ENCODE measurements at regions of chr12 and their contacts with region 1.

Region 1: GRCh38 chr12:15899282-15899870 is 11.8 kb upstream of the DERA start:
- DNase-seq: peak in 1 of 2 experiments; percentile 35
- ATAC-seq: peak in 1 of 2 experiments; percentile 67; a peak in 4 of 6 replicates
- H3K4me3 ChIP-seq: no peak overlapping the region
- H3K27ac ChIP-seq: no peak overlapping the region
- H3K4me1 ChIP-seq: no peaks in the 10 kb centered on the region
- CTCF ChIP-seq: peak; percentile 84
- EP300 ChIP-seq: no peak
- POLR2A ChIP-seq: no peak
- RAD21 ChIP-seq: peak; percentile 57 to 64

Region 2: GRCh38 chr12:15842108-15842507 is 57.3 kb before region 1 on chr12:
- CTCF ChIA-PET with region 1: no interaction called
- POLR2A ChIA-PET with region 1: no interaction called
- DNase-seq: peak in 1 of 2 experiments; percentile 19
- ATAC-seq: no peak
- H3K4me3 ChIP-seq: no peak overlapping the region
- H3K27ac ChIP-seq: no peak overlapping the region
- H3K4me1 ChIP-seq: peaks cover 9% of the 10 kb centered on the region; the same call in 2 of the 3 replicates
- CTCF ChIP-seq: no peak
- EP300 ChIP-seq: no peak
- POLR2A ChIP-seq: no peak
- RAD21 ChIP-seq: no peak

Region 3: GRCh38 chr12:15886372-15887042 is 12.9 kb before region 1 on chr12:
- CTCF ChIA-PET with region 1: interaction called, 10 read pairs
- POLR2A ChIA-PET with region 1: interaction called, 4 read pairs
- DNase-seq: peak in 1 of 2 experiments; percentile 28
- ATAC-seq: no peak
- H3K4me3 ChIP-seq: no peak overlapping the region
- H3K27ac ChIP-seq: no peak overlapping the region
- H3K4me1 ChIP-seq: peaks cover 37% of the 10 kb centered on the region; the same call in 2 of the 3 replicates
- CTCF ChIP-seq: no peak
- EP300 ChIP-seq: no peak
- POLR2A ChIP-seq: no peak
- RAD21 ChIP-seq: no peak

Region 4: DNA sequence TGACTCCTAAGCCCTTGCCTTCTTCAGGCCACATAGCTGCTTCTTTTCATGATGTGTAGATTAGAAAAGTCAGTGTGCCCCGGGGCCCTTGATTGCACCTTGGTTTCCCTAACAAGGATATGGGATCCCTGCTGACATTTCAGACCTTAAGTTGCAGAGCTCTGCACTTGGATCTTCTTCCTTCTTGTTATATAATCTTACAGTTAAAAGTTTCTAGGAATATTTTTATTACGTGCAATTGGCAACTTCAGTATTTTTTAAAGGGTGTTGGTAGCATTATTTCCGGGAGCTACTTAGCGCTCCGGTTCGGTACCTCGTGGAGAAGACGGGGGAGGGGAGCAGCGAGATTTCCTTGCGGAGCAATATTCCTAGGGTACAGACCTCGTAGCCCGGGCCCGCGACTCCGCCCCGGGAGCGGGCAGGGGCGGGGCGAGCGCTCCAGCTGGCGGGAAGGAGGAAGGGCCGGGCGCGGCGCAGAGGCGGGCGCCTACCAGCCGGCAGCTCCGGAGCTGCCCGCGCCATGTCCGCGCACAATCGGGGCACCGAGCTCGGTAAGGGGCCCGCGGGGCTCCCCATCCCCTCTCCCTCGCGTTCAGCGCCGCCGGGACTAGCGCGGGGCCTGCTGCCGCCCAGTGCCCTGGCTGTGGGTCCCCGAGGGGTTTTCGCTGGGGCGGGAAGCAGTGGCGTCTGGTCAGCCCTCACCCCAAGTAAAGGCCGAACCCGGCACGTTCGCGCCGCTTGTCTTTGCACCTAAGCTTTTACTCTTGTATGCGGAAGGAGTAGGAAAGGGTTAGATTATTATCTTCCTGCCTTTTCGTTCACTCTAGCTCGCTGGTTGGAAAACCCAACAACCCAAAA is 11.7 kb after region 1 on chr12 and contains the start of gene DERA:
- CTCF ChIA-PET with region 1: interaction called, 17 read pairs
- POLR2A ChIA-PET with region 1: interaction called, 13 read pairs
- DNase-seq: peak; percentile 72 to 83
- ATAC-seq: peak; percentile 97 to 99
- H3K4me3 ChIP-seq: peak within 1 kb of the TSS; percentile 58
- H3K27ac ChIP-seq: peak within 1 kb of the TSS; percentile 83 to 96
- H3K4me1 ChIP-seq: peaks cover 20% of the 10 kb centered on the region
- CTCF ChIP-seq: no peak
- EP300 ChIP-seq: no peak
- POLR2A ChIP-seq: peak; percentile 93
- RAD21 ChIP-seq: no peak
- polyA plus RNA-seq, gene DERA: 50.5 and 65.0 TPM in 2 replicates

Region 5: DNA sequence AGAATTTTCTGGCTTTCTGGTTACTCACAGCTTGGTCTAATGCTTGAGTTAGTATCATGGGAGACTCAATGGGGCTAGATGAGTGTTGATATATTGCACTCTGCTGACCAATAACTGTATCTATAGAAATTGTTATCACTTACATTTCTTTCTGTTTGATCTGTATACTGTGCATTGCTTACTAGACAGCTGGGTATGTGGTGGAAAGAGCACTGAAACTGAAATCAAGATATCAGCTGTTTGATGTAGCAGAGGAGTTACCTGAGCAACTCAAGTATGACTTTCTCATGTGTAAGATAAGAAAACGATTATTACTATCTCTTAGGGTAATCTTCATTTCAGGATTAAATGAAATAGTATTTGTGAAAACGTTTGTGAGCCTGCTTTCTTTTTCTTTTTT is 195.1 kb after region 1 on chr12:
- CTCF ChIA-PET with region 1: no interaction called
- POLR2A ChIA-PET with region 1: no interaction called
- DNase-seq: no peak
- ATAC-seq: no peak
- H3K4me3 ChIP-seq: no peak overlapping the region
- H3K27ac ChIP-seq: no peak overlapping the region
- H3K4me1 ChIP-seq: no peaks in the 10 kb centered on the region
- CTCF ChIP-seq: no peak
- EP300 ChIP-seq: no peak
- POLR2A ChIP-seq: no peak
- RAD21 ChIP-seq: no peak